ENCODE measurements at regions of chr4 and their contacts with region 1.

Region 1: GRCh38 chr4:78775303-78776030 is 683 bp upstream of the BMP2K start:
- DNase-seq: peak; percentile 98
- H3K4me3 ChIP-seq: peak overlapping the region; percentile 65 to 98 (median 87)
- H3K27ac ChIP-seq: peak overlapping the region; percentile 96 to 100 (median 98)
- H3K4me1 ChIP-seq: peaks cover 33 to 46% (median 41%) of the 10 kb centered on the region in 4 donors
- H3K27me3 ChIP-seq: no peaks in the 10 kb centered on the region
- CTCF ChIP-seq: no peak
- EP300 ChIP-seq: peak; percentile 68
- POLR2A ChIP-seq: no peak

Region 2: GRCh38 chr4:78644744-78645330 is 130.6 kb before region 1 on chr4:
- intact Hi-C with region 1: loop called (anchors 2 kb)
- DNase-seq: no peak
- H3K4me3 ChIP-seq: no peak overlapping the region
- H3K27ac ChIP-seq: peak overlapping the region; percentile 76 to 84 (median 79)
- H3K4me1 ChIP-seq: peaks cover 34 to 49% (median 37%) of the 10 kb centered on the region in 4 donors
- H3K27me3 ChIP-seq: no peaks in the 10 kb centered on the region
- CTCF ChIP-seq: peak; percentile 98 to 99 (median 99)
- EP300 ChIP-seq: no peak
- POLR2A ChIP-seq: no peak

Measured in esophagus muscularis mucosa (tissue), 4 donors.